ENCODE measurements at regions of chr12 and their contacts with region 1.

Region 1: GRCh38 chr12:122902854-122903692 is 7.1 kb upstream of the VPS37B start:
- DNase-seq: no peak
- ATAC-seq: no peak
- H3K4me3 Mint-ChIP-seq: no peak overlapping the region
- H3K27ac Mint-ChIP-seq: peak overlapping the region; percentile 70
- H3K4me1 Mint-ChIP-seq: peaks cover 53% of the 10 kb centered on the region
- H3K27me3 Mint-ChIP-seq: no peaks in the 10 kb centered on the region
- CTCF ChIP-seq: no peak

Region 2: GRCh38 chr12:122860346-122861090 is 42.6 kb before region 1 on chr12:
- CTCF ChIA-PET with region 1: interaction called, 3 read pairs
- POLR2A ChIA-PET with region 1: interaction called, 16 read pairs
- intact Hi-C with region 1: loop called (anchors 5 kb)
- DNase-seq: peak; percentile 76
- ATAC-seq: peak; percentile 72
- H3K4me3 Mint-ChIP-seq: no peak overlapping the region
- H3K27ac Mint-ChIP-seq: no peak overlapping the region
- H3K4me1 Mint-ChIP-seq: peaks cover 49% of the 10 kb centered on the region
- H3K27me3 Mint-ChIP-seq: no peaks in the 10 kb centered on the region
- CTCF ChIP-seq: peak; percentile 72

Region 3: DNA sequence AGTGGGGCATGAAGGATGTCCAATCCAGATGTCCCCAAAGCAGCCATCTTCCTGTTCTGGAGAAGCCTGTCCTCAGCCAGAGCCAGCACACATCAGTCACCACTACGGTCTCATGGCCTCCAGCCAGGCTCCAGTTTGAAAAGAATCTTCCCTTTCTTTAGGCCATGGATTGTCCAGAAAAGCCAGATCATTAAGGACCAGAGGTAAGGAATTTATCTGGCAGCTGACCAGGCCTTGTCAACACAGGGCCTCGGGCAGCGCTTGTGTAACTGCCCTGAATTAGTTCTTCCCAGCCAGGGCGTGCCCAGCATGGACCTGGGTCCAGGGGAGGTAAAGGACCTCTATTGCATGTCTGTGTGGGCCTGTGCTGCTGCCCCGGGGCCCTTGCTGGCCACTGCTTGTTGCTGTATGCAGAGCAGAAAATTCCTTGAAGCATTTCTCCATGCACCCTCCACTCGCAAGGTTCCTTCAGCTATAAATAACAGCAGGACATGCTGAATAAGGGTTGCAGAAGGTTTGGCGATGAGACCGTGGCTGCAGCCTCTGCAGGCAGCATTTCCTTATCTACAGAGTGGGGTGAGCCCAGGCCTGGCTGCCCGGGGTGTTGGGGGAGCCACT is 14.5 kb after region 1 on chr12:
- CTCF ChIA-PET with region 1: no interaction called
- POLR2A ChIA-PET with region 1: interaction called, 12 read pairs
- intact Hi-C with region 1: loop called (anchors 2 kb)
- DNase-seq: no peak
- ATAC-seq: no peak
- H3K4me3 Mint-ChIP-seq: no peak overlapping the region
- H3K27ac Mint-ChIP-seq: no peak overlapping the region
- H3K4me1 Mint-ChIP-seq: peaks cover 10% of the 10 kb centered on the region
- H3K27me3 Mint-ChIP-seq: no peaks in the 10 kb centered on the region
- CTCF ChIP-seq: no peak

Region 4: DNA sequence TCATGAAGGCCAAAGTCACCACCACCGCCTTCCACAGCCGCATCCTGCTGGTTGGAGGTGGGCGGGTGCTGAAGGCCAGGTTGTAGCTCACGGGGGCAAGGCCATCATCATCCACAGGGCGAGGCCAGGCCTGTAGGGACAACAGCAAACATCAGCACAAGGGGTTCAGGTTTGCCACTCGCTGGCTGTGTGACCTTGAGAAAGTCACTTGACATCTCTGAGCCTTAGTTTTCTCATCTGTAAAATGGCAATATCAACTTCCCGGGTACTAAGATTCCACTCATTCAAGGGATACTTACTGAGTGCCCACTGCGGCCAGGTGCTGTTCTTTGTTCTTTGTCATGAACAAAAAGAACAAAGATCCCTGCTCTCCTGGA is 57.1 kb after region 1 on chr12:
- CTCF ChIA-PET with region 1: no interaction called
- POLR2A ChIA-PET with region 1: interaction called, 10 read pairs
- intact Hi-C with region 1: no loop called
- DNase-seq: no peak
- ATAC-seq: no peak
- H3K4me3 Mint-ChIP-seq: no peak overlapping the region
- H3K27ac Mint-ChIP-seq: no peak overlapping the region
- H3K4me1 Mint-ChIP-seq: peaks cover 3% of the 10 kb centered on the region
- H3K27me3 Mint-ChIP-seq: no peaks in the 10 kb centered on the region
- CTCF ChIP-seq: no peak

Region 5: GRCh38 chr12:123972457-123973401 is 1069.7 kb after region 1 on chr12 and contains the starts of genes CCDC92 and ZNF664:
- CTCF ChIA-PET with region 1: no interaction called
- POLR2A ChIA-PET with region 1: no interaction called
- intact Hi-C with region 1: no loop called
- DNase-seq: peak; percentile 98
- ATAC-seq: peak; percentile 84
- H3K4me3 Mint-ChIP-seq: peak within 1 kb of the TSS; percentile 92
- H3K27ac Mint-ChIP-seq: peak within 1 kb of the TSS; percentile 88
- H3K4me1 Mint-ChIP-seq: peaks cover 15% of the 10 kb centered on the region
- H3K27me3 Mint-ChIP-seq: no peaks in the 10 kb centered on the region
- CTCF ChIP-seq: no peak
- total RNA-seq, gene CCDC92: 21.5 and 23.7 TPM in 2 replicates
- total RNA-seq, gene ZNF664: 35.6 and 40.7 TPM in 2 replicates